ENCODE measurements at regions of chr19 and their contacts with region 1.

Region 1: DNA sequence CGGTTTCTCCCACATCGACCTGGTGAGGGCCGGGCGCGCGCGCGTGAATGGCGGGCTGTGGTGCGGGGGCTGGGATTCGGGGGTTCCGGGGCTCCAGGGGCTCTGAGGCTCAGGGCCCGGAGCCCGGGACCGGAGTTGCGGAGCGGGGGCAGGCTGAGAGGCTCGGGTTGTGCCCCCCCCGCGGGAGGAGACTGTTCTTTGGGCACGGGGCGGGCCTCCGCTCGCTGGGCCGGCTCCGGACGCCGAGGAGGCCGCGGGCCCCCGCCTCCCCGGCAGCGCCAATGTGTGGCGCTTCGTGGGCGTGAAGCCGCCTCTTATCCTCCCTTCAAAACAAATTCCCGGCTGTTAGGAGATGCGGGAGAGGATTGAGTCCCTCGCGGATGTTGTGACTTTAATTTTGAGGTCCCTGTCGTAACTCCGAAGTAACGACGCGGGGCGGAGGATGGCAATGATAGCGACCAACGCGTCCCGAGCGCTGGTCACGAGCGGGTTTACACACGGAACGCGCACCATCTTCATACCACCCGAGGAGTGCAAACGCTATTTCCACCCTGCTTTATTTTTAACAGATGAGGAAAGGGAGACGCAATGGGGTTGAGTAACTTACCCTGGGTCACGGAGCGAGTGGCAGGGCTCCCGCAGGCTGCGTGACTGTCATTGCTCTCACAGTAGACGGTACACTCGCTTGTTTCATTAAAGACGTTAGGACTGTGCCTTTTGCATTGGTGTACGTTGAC is 536 bp downstream of the UBA2 start:
- DNase-seq: peak; percentile 7
- H3K4me3 ChIP-seq: peak overlapping the region; percentile 60 to 85
- H3K27ac ChIP-seq: peak overlapping the region; percentile 82 to 84
- H3K4me1 ChIP-seq: no peaks in the 10 kb centered on the region
- H3K27me3 ChIP-seq: no peaks in the 10 kb centered on the region
- CTCF ChIP-seq: no peak
- POLR2A ChIP-seq: no peak

Region 2: DNA sequence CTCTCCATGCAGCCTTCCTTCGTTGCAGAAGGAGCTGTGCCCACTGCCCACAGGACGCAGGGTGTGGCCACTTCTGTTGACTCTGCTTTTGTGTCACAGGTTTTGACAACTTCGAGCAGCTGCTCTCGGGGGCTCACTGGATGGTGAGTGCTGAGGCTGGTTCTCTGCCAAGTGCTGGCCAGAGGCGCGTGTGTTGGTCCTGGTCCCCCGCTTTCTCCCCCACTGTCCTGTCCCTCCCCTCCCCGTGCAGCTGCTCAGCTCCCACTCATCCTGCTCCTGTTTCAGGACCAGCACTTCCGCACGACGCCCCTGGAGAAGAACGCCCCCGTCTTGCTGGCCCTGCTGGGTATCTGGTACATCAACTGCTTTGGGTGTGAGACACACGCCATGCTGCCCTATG is 35.1 kb before region 1 on chr19:
- intact Hi-C with region 1: no loop called
- DNase-seq: no peak
- H3K4me3 ChIP-seq: no peak overlapping the region
- H3K27ac ChIP-seq: no peak overlapping the region
- H3K4me1 ChIP-seq: no peaks in the 10 kb centered on the region
- H3K27me3 ChIP-seq: no peaks in the 10 kb centered on the region
- CTCF ChIP-seq: no peak
- POLR2A ChIP-seq: no peak

Region 3: DNA sequence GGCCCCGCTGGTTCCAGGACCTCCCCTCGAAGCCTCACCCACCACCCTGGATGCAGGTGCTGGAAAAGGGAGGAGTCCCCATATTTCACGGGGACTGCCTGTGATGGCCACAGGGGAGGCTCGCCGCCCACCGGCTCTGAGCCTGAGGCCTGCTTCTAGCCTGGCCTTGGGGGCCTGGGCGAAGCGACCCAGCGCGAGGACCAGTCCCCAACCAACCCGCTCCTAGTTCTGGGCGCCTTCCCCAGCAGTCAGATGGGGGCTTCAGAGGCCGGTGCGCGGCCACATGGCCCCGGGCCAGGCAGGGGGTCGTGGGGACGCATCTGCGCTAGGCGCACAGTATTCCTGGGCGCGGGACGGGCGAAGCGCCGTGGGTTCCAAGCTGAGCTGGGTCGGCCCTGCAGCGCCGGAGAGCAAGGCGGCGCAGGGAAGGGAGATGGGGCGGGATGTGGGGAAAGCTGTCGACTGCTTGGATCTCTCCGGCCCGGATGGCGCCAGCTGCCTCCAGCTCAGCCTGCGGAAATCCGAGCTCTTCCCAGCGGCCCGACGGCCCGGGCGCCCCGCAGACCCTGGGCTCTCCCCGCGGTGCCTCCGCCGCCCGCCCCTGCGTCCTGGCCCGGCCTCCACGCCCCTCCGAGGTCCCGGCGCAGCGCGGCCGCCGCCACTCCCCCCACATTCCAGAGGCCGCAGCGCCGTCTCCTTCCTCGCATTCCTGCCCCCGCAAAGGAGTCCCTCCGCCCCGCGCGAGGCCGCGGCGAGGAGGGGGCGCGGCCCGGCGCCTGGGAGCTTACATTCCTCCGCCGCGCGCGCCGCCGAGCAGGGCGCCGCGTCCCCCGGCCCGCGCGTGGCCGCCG is 52.5 kb after region 1 on chr19 and contains the start of gene WTIP:
- intact Hi-C with region 1: loop called (anchors 5 kb)
- DNase-seq: peak; percentile 50
- H3K4me3 ChIP-seq: peak within 1 kb of the TSS; percentile 52 to 57
- H3K27ac ChIP-seq: peak within 1 kb of the TSS; percentile 69 to 71
- H3K4me1 ChIP-seq: no peaks in the 10 kb centered on the region
- H3K27me3 ChIP-seq: no peaks in the 10 kb centered on the region
- CTCF ChIP-seq: no peak
- POLR2A ChIP-seq: peak; percentile 17
- total RNA-seq, gene WTIP: 22.9 to 40.8 TPM

Region 4: DNA sequence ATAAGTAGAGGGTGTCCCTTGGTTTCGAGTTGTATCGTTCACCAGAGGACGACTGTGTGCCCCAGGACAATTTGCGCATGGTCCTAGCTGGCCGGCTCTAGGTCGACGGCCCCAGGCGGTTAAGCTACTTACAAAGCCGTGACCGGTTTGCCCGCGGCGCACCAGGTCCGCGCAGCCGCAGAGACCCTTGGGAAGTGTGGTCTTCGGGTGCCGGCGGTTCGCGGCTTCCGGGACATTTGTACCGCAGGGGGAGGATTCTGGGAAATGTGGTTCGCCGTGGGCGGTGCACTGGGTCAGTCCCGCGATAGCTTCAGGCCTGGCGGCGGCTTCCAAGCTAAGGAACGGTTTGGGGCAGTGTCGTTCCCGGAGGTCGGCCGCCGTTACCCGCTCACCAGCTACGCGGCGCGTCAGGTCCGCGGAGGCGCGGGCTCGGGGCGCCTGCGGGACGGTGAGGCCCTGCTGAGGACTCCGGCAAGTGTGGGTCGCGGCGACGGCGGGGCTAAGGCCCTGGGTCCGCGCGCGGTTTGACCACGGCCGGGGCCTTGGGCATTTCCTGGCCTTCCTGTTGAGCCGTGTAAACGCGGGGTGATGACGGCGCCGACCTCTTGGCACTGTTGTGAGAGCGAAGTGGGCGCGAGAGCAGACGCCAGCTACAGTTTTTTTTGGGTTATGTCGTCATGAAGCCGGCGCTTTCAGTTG is 248.8 kb after region 1 on chr19 and contains the start of gene ZNF302:
- intact Hi-C with region 1: loop called (anchors 10 kb)
- DNase-seq: peak; percentile 97
- H3K4me3 ChIP-seq: peak within 1 kb of the TSS; percentile 74 to 82
- H3K27ac ChIP-seq: peak within 1 kb of the TSS; percentile 90 to 94
- H3K4me1 ChIP-seq: no peaks in the 10 kb centered on the region
- H3K27me3 ChIP-seq: no peaks in the 10 kb centered on the region
- CTCF ChIP-seq: peak in 1 of 4 experiments; percentile 29
- POLR2A ChIP-seq: no peak
- total RNA-seq, gene ZNF302: 20.0 to 25.0 TPM

Measured in prostate gland (tissue), 2 donors.